ENCODE measurements at regions of chr15 and their contacts with region 1.

Region 1: DNA sequence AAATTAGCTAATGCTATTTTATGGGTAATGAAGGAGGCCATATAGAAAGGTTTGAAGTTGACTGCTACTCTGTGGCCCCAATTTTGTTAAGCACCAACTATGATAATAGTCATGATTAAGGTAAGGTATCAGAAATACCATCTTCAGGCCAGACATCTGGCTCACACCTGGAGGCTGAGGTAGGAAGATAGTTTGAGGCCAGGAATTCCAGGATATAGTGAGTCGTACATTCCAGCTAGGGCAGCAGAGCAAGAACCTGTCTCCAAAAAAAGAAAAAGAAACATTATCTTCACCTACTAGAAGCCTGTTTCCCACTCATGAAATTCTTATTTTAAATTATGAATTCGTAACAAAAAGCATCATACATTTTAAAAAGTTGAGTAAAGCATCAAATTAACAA is 64.4 kb downstream of the LRRC28 start:
- DNase-seq: peak in 1 of 2 experiments; percentile 8
- H3K4me3 ChIP-seq: no peak overlapping the region
- H3K27ac ChIP-seq: no peak overlapping the region
- H3K4me1 ChIP-seq: no peaks in the 10 kb centered on the region
- H3K27me3 ChIP-seq: no peaks in the 10 kb centered on the region
- CTCF ChIP-seq: no peak

Region 2: GRCh38 chr15:99264125-99264524 is 51.5 kb before region 1 on chr15:
- CTCF ChIA-PET with region 1: interaction called, 16 read pairs
- POLR2A ChIA-PET with region 1: no interaction called
- intact Hi-C with region 1: no loop called
- DNase-seq: no peak
- H3K4me3 ChIP-seq: no peak overlapping the region
- H3K27ac ChIP-seq: no peak overlapping the region
- H3K4me1 ChIP-seq: no peaks in the 10 kb centered on the region
- H3K27me3 ChIP-seq: no peaks in the 10 kb centered on the region
- CTCF ChIP-seq: no peak